T-cell (primary cell): ENCODE measurements at regions of chr2 and their contacts with region 1.

Region 1: DNA sequence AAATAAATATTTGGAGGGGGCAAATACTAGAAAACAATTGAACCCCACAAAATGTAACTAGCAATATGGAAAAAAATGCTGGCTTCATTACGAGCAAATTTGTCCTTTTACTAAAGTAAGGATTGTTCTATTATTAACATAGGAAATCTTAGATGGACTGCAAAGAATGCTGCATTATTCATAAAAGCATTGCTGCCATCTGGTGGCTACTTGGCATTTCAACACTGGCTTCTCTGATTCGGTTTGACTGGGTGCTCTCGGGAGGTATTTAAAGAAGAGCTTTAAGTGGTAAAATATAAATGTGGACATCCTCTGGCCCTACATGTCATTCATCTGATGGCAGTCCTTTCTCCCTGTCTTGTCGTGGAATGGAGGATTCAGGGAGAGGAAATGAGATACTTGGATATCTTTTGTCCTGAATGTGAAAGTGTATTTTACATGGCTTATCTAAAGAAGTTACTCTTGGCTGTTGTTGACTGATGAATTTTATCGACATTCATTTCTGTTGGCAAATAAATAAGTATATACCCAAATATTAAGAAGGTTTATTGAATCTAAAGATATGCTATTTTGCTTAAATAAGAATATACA is 130.2 kb downstream of the ARHGAP15 start:
- DNase-seq: peak; percentile 39 to 90 (median 64)
- ATAC-seq: peak; percentile 22 to 52 (median 30)
- H3K4me3 ChIP-seq: no peak overlapping the region
- H3K4me3 Mint-ChIP-seq: peak overlapping the region; percentile 58 to 71 (median 62)
- H3K27ac ChIP-seq: peak overlapping the region; percentile 72
- H3K27ac Mint-ChIP-seq: peak overlapping the region; percentile 90 to 91
- H3K4me1 ChIP-seq: peaks cover 41 to 62% of the 10 kb centered on the region in 2 experiments
- H3K4me1 Mint-ChIP-seq: peaks cover 81 to 82% (median 81%) of the 10 kb centered on the region in 3 donors
- H3K27me3 ChIP-seq: no peaks in the 10 kb centered on the region
- H3K27me3 Mint-ChIP-seq: no peaks in the 10 kb centered on the region

Region 2: GRCh38 chr2:143034292-143035074 is 225.0 kb before region 1 on chr2:
- CTCF ChIA-PET with region 1: interaction called, 9 to 28 read pairs
- POLR2A ChIA-PET with region 1: no interaction called
- DNase-seq: peak in 34 of 35 experiments; percentile 10 to 88 (median 45)
- ATAC-seq: peak; percentile 88 to 98 (median 96)
- H3K4me3 ChIP-seq: no peak overlapping the region
- H3K4me3 Mint-ChIP-seq: no peak overlapping the region
- H3K27ac ChIP-seq: no peak overlapping the region
- H3K27ac Mint-ChIP-seq: no peak overlapping the region
- H3K4me1 ChIP-seq: no peaks in the 10 kb centered on the region
- H3K4me1 Mint-ChIP-seq: peaks cover 0 to 6% (median 5%) of the 10 kb centered on the region in 3 donors
- H3K27me3 ChIP-seq: no peaks in the 10 kb centered on the region
- H3K27me3 Mint-ChIP-seq: peaks cover 0 to 2% of the 10 kb centered on the region in 2 donors

Region 3: GRCh38 chr2:143128681-143129580 is 130.5 kb before region 1 on chr2 and contains the start of gene ARHGAP15:
- CTCF ChIA-PET with region 1: interaction called, 4 to 10 read pairs
- POLR2A ChIA-PET with region 1: interaction called in 1 of 2 experiments, 7 read pairs
- DNase-seq: peak; percentile 42 to 88 (median 76)
- ATAC-seq: peak; percentile 88 to 91 (median 90)
- H3K4me3 ChIP-seq: peak within 1 kb of the TSS; percentile 49 to 58
- H3K4me3 Mint-ChIP-seq: peak within 1 kb of the TSS; percentile 79 to 82 (median 80)
- H3K27ac ChIP-seq: peak within 1 kb of the TSS; percentile 89
- H3K27ac Mint-ChIP-seq: peak within 1 kb of the TSS; percentile 90 to 100
- H3K4me1 ChIP-seq: peaks cover 43 to 71% of the 10 kb centered on the region in 2 experiments
- H3K4me1 Mint-ChIP-seq: peaks cover 39 to 54% (median 49%) of the 10 kb centered on the region in 3 donors
- H3K27me3 ChIP-seq: no peaks in the 10 kb centered on the region
- H3K27me3 Mint-ChIP-seq: no peaks in the 10 kb centered on the region
- total RNA-seq, gene ARHGAP15: 154 to 271 (median 188) TPM

Region 4: GRCh38 chr2:143193121-143193520 is 66.3 kb before region 1 on chr2:
- CTCF ChIA-PET with region 1: interaction called, 4 to 19 read pairs
- POLR2A ChIA-PET with region 1: interaction called, 3 to 10 read pairs
- DNase-seq: no peak
- ATAC-seq: no peak
- H3K4me3 ChIP-seq: no peak overlapping the region
- H3K4me3 Mint-ChIP-seq: no peak overlapping the region
- H3K27ac ChIP-seq: no peak overlapping the region
- H3K27ac Mint-ChIP-seq: peak overlapping the region in 1 of 2 donors; percentile 56
- H3K4me1 ChIP-seq: peaks cover 2 to 3% of the 10 kb centered on the region in 2 experiments
- H3K4me1 Mint-ChIP-seq: peaks cover 56 to 64% (median 58%) of the 10 kb centered on the region in 3 donors
- H3K27me3 ChIP-seq: no peaks in the 10 kb centered on the region
- H3K27me3 Mint-ChIP-seq: no peaks in the 10 kb centered on the region

Region 5: DNA sequence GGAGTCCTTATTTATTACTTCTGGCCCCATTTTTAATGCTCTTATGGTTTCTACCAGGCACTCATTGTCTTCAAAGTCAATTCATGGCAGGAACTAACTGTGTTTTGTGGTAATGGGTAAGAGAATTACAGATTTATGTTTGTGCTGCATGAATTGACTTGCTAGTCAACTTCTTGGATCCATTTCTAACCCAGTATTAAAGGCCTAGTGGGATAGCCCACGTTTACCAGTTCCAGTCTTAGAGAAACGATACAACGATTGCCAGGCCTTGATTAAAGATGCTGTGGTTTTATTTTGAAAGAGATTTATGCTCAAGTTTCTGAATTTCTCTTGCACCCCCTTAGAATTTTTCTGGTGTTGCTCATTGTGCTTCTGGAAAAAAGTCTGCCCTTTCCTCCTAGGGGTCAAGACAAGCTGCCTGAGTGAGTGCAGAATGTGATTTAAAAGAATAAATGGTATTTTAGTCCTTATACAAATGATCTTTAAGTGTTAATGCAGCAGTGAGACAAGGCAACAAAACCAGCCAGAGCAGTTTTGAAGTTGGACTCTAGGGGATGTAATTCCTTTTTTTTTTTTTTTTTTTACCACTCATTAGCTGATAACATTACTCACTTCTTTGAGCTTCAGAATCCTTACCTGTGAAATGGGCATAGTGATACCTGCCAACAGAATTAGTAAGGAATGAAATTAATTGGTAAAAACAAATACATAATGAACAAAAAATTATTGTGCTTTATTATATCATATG is 28.8 kb before region 1 on chr2:
- CTCF ChIA-PET with region 1: interaction called, 3 to 18 read pairs
- POLR2A ChIA-PET with region 1: interaction called, 4 to 5 read pairs
- DNase-seq: no peak
- ATAC-seq: no peak
- H3K4me3 ChIP-seq: no peak overlapping the region
- H3K4me3 Mint-ChIP-seq: no peak overlapping the region
- H3K27ac ChIP-seq: no peak overlapping the region
- H3K27ac Mint-ChIP-seq: peak overlapping the region; percentile 30 to 48
- H3K4me1 ChIP-seq: no peaks in the 10 kb centered on the region
- H3K4me1 Mint-ChIP-seq: peaks cover 25 to 27% (median 27%) of the 10 kb centered on the region in 3 donors
- H3K27me3 ChIP-seq: no peaks in the 10 kb centered on the region
- H3K27me3 Mint-ChIP-seq: no peaks in the 10 kb centered on the region

Region 6: DNA sequence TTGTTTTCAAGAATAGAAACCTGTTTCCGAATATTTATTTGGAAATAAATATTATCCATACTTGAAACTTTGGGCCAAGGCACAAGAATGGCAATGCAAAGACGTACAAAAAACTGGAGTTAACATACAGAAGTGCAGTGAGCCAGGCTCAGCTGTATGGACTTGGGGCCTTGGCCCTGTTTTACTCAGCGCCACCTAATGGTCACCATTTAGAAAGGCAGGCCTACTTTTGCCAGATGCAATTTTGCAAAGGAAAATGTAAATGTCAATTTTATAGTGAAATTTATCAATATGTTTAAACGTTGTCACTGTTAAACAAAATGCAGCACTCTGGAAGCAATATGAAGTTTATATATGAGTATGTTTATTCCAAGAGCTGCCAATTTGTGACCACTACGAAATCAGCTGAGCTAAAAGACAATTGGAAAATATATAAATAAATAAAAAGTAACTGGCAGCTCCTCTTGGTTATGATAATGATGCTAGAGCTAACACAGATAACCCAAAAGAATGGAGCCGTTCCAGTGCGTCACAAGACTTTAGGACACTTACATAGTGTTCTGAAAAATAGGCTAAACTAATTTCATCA is 24.7 kb after region 1 on chr2:
- CTCF ChIA-PET with region 1: interaction called, 11 to 13 read pairs
- POLR2A ChIA-PET with region 1: interaction called in 1 of 2 experiments, 4 read pairs
- DNase-seq: peak in 24 of 35 experiments; percentile 3 to 71 (median 12)
- ATAC-seq: peak; percentile 66 to 75 (median 70)
- H3K4me3 ChIP-seq: no peak overlapping the region
- H3K4me3 Mint-ChIP-seq: no peak overlapping the region
- H3K27ac ChIP-seq: no peak overlapping the region
- H3K27ac Mint-ChIP-seq: peak overlapping the region in 1 of 2 donors; percentile 0
- H3K4me1 ChIP-seq: no peaks in the 10 kb centered on the region
- H3K4me1 Mint-ChIP-seq: peaks cover 51 to 69% (median 57%) of the 10 kb centered on the region in 3 donors
- H3K27me3 ChIP-seq: no peaks in the 10 kb centered on the region
- H3K27me3 Mint-ChIP-seq: no peaks in the 10 kb centered on the region